ENCODE measurements at regions of chr5 and their contacts with region 1.

Region 1: GRCh38 chr5:96662725-96663513 is 743 bp downstream of the CAST start:
- DNase-seq: peak; percentile 94
- H3K4me3 Mint-ChIP-seq: peak overlapping the region; percentile 99
- H3K27ac Mint-ChIP-seq: peak overlapping the region; percentile 98
- H3K4me1 Mint-ChIP-seq: peaks cover 45% of the 10 kb centered on the region
- H3K27me3 Mint-ChIP-seq: peaks cover 14% of the 10 kb centered on the region

Region 2: DNA sequence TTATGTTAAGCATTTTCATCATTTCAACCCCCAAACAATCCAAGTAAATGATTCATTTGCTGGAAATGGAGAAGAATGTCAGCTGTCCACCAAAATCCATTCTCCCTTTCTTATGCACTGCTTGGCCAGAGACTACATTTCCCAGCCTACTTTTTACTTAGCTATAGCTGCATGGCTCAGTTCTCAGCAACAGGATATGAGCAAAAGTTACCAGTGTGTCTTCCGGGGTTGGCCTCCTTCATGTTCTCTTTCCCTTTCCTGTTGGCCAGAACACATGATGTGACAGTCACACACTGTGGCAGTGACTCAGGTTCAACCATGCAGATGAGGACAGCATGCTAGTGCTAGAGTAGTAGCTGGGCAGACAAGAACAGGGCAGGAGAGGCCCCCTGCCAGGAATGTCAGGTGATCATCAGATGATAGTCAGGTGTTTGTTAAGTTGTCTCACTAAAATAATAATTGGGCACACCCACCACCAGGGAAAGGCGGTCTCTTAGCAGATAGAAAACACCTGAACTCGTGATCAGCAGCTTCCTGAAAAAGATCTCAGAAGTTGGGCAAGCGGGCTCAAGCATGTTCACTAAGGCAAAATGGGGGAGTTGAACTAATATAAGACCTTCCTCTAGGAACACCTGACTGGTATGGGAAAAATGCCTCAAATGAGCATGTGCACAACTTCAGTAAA is 1030.8 kb before region 1 on chr5:
- CTCF ChIA-PET with region 1: no interaction called
- POLR2A ChIA-PET with region 1: no interaction called
- intact Hi-C with region 1: loop called (anchors 5 kb)
- DNase-seq: peak; percentile 86
- H3K4me3 Mint-ChIP-seq: peak overlapping the region; percentile 51
- H3K27ac Mint-ChIP-seq: peak overlapping the region; percentile 91
- H3K4me1 Mint-ChIP-seq: peaks cover 22% of the 10 kb centered on the region
- H3K27me3 Mint-ChIP-seq: no peaks in the 10 kb centered on the region

Region 3: DNA sequence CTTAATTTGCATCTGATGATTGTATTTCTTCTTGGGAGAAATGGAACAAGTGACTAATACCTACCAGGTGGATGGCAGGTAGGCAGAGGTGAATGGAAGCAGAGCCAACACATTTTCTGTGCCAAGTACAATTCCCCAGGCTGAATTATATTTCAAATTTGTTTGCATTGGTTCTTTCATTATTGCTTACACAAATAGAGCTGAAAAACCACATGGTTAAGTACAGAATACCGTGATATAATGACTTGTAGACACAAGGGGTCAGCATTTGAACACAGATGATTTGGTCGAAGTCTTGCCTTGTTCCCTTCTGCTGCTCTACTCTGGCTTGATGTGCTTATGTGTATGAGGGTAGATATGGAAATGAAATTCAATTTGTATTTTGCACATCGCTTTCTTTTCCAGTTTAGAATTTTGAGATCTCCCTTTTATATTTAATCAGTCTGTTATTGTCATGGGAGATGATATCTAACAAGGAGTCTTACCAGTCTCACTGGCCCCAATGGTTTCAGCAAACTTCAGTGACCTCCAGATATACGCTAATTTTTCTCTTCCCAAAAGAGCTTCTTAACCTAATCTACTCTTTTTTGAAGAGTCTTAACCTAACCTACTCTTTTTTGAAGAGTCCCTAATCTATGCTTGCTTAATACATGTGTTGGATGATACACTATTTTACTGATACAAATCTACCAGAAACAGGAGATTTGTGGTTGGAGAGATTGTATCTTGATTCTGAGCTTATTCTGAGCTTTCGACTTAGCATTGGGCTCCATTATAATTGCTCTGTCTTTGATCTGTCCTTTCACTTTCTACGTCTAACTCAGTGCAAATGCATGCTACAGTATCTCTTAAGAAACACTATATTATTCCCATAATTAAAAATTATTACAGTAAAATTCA is 318.0 kb before region 1 on chr5:
- CTCF ChIA-PET with region 1: interaction called, 4 read pairs
- POLR2A ChIA-PET with region 1: no interaction called
- intact Hi-C with region 1: loop called (anchors 1 kb)
- DNase-seq: no peak
- H3K4me3 Mint-ChIP-seq: no peak overlapping the region
- H3K27ac Mint-ChIP-seq: no peak overlapping the region
- H3K4me1 Mint-ChIP-seq: peaks cover 27% of the 10 kb centered on the region
- H3K27me3 Mint-ChIP-seq: peaks cover 26% of the 10 kb centered on the region

Region 4: GRCh38 chr5:96687812-96688453 is 25.0 kb after region 1 on chr5:
- CTCF ChIA-PET with region 1: interaction called, 3 read pairs
- POLR2A ChIA-PET with region 1: interaction called, 8 read pairs
- intact Hi-C with region 1: loop called (anchors 2 kb)
- DNase-seq: no peak
- H3K4me3 Mint-ChIP-seq: no peak overlapping the region
- H3K27ac Mint-ChIP-seq: no peak overlapping the region
- H3K4me1 Mint-ChIP-seq: peaks cover 30% of the 10 kb centered on the region
- H3K27me3 Mint-ChIP-seq: no peaks in the 10 kb centered on the region

Region 5: GRCh38 chr5:96807075-96807654 is 144.2 kb after region 1 on chr5:
- CTCF ChIA-PET with region 1: no interaction called
- POLR2A ChIA-PET with region 1: interaction called, 7 read pairs
- intact Hi-C with region 1: loop called (anchors 2 kb)
- DNase-seq: peak; percentile 59
- H3K4me3 Mint-ChIP-seq: peak overlapping the region; percentile 94
- H3K27ac Mint-ChIP-seq: peak overlapping the region; percentile 98
- H3K4me1 Mint-ChIP-seq: peaks cover 72% of the 10 kb centered on the region
- H3K27me3 Mint-ChIP-seq: no peaks in the 10 kb centered on the region

Region 6: DNA sequence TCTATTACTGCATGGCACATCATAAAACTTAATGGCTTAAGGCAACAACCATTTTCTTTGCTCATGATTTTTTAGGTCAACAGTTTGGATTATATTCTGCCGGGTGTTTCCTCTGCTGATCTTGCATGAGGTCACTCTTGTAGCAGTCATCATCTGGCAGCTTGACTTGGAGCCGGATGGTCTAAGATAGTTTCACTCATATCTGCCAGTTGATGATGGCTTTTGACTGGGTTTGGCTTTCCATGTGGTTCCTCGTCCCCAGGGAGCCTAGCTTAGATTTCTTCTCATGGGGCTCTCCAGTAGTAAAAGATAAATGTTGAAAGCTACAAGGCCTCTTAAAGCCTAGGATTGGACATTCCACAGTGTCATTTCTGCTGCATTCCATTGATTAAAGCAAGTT is 300.3 kb after region 1 on chr5:
- CTCF ChIA-PET with region 1: no interaction called
- POLR2A ChIA-PET with region 1: no interaction called
- intact Hi-C with region 1: loop called (anchors 5 kb)
- DNase-seq: peak; percentile 41
- H3K4me3 Mint-ChIP-seq: peak overlapping the region; percentile 59
- H3K27ac Mint-ChIP-seq: peak overlapping the region; percentile 86
- H3K4me1 Mint-ChIP-seq: peaks cover 77% of the 10 kb centered on the region
- H3K27me3 Mint-ChIP-seq: no peaks in the 10 kb centered on the region

Measured in activated CD4-positive, alpha-beta memory T cell treated with anti-CD3 and anti-CD28 coated beads for 36 hours (primary cell).